ENCODE measurements at regions of chr21 and their contacts with region 1.

Region 1: DNA sequence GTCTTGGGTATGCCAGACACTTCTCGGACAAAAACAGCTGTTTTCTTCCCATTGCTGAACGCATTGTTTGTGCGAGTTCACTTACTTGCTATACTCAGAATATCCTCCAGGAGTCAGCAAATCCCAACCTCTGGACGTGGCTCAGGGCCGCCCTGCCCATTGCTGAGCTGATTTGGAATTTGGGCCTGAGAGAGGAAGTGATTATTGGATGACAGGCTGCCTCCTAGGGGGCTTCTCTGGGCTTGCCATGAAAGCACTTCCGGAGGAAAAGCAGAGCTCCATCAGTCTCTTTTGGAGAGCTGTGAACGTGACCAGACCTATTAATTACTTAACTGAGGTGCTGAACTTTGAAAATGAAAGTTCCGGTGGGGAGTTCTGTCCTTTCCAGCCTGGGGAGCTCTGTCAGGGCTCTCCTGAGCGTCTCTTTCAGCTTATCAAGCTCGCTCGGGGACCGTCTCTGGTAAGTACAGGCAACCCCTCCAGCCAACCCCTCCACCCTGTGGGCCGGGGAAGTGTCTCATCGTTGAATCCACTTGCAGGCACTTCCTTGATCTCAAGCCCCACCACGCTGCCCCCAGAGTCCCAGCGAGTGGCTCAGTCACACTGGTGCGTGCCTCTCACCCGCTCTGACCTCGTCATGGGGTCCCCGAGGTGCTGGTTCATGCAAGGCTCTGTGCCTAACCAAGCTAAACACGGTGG is 76.9 kb downstream of the CLIC6 start:
- DNase-seq: peak; percentile 83
- H3K4me3 Mint-ChIP-seq: no peak overlapping the region
- H3K27ac Mint-ChIP-seq: no peak overlapping the region
- H3K4me1 Mint-ChIP-seq: peaks cover 26% of the 10 kb centered on the region
- H3K27me3 Mint-ChIP-seq: no peaks in the 10 kb centered on the region
- CTCF ChIP-seq: peak; percentile 95

Region 2: DNA sequence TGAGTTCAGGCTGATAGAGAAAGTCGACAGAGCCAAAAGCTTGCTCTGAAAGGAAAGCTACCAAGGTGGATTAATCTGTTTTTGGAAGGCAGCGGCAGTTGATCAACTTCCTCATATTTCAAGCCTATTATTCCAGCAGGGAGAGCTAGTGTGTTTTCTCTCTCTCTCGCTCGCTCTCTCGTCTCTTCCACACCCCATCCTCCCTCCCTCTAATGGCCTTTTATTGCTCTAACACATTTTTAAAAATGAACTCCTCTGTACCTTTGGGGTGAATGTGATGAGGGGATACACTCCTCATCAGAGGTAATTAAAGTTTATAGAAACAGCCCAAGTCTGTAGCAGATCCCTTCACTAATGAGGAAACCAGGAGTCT is 49.5 kb after region 1 on chr21:
- CTCF ChIA-PET with region 1: interaction called, 27 read pairs
- POLR2A ChIA-PET with region 1: interaction called, 19 read pairs
- intact Hi-C with region 1: loop called (anchors 2 kb)
- DNase-seq: peak; percentile 43
- H3K4me3 Mint-ChIP-seq: peak overlapping the region; percentile 49
- H3K27ac Mint-ChIP-seq: peak overlapping the region; percentile 96
- H3K4me1 Mint-ChIP-seq: peaks cover 44% of the 10 kb centered on the region
- H3K27me3 Mint-ChIP-seq: no peaks in the 10 kb centered on the region
- CTCF ChIP-seq: no peak

Region 3: DNA sequence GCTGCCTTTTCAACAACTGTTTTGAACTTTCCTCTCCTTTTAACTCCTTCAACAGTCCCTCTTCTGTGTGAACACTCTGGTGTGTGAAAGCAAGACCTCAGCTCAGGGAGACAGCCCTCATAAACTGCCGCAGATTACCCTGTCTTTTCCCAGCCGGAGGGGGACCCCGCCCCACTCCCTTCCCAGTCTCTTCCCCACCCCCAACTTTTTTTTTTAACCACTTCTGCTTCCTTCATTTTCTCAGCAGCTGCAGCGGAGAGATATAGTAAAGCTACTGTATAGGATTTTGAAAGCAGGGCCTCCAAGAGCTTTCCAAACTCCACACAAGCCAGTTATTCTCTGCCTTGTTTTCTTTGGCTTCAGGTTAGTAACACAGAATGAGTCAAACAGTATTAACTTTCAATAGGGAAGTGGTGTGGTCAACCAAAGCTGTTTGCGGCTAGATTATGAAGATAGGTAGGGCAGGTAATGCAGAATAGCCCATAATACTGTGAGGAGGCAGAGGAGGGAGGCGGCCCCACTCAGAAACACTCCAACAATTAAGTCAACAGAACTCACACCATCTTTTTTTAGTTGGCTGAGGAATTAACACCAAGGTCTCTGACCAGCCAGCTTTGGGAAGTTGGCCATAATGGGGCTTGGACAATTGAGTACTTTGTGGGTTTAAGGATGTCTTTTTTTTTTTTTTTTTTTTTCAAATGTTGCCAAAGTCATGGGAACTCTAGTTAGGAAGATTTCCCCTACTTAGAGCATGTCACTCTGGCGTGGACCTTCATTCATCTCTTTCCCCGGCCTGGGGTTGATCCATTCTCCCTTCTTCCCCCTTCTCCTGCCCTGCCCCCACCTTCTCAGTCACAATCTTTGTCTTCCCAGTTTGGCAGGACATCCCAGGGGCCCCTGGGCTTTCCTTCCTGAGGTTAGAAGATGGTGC is 100.1 kb after region 1 on chr21:
- CTCF ChIA-PET with region 1: interaction called, 4 read pairs
- POLR2A ChIA-PET with region 1: interaction called, 14 read pairs
- intact Hi-C with region 1: loop called (anchors 1 kb)
- DNase-seq: peak; percentile 94
- H3K4me3 Mint-ChIP-seq: peak overlapping the region; percentile 60
- H3K27ac Mint-ChIP-seq: peak overlapping the region; percentile 92
- H3K4me1 Mint-ChIP-seq: peaks cover 47% of the 10 kb centered on the region
- H3K27me3 Mint-ChIP-seq: no peaks in the 10 kb centered on the region
- CTCF ChIP-seq: no peak

Region 4: GRCh38 chr21:35616090-35616489 is 870.4 kb after region 1 on chr21:
- CTCF ChIA-PET with region 1: interaction called, 4 read pairs
- POLR2A ChIA-PET with region 1: interaction called, 3 read pairs
- intact Hi-C with region 1: loop called (anchors 10 kb)
- DNase-seq: peak; percentile 44
- H3K4me3 Mint-ChIP-seq: no peak overlapping the region
- H3K27ac Mint-ChIP-seq: no peak overlapping the region
- H3K4me1 Mint-ChIP-seq: peaks cover 27% of the 10 kb centered on the region
- H3K27me3 Mint-ChIP-seq: no peaks in the 10 kb centered on the region
- CTCF ChIP-seq: peak; percentile 47

Region 5: GRCh38 chr21:35940074-35940927 is 1194.6 kb after region 1 on chr21:
- CTCF ChIA-PET with region 1: no interaction called
- POLR2A ChIA-PET with region 1: no interaction called
- intact Hi-C with region 1: loop called (anchors 1 kb)
- DNase-seq: peak; percentile 74
- H3K4me3 Mint-ChIP-seq: no peak overlapping the region
- H3K27ac Mint-ChIP-seq: no peak overlapping the region
- H3K4me1 Mint-ChIP-seq: no peaks in the 10 kb centered on the region
- H3K27me3 Mint-ChIP-seq: no peaks in the 10 kb centered on the region
- CTCF ChIP-seq: peak; percentile 66